ENCODE measurements at regions of chr14 and their contacts with region 1.

Region 1: DNA sequence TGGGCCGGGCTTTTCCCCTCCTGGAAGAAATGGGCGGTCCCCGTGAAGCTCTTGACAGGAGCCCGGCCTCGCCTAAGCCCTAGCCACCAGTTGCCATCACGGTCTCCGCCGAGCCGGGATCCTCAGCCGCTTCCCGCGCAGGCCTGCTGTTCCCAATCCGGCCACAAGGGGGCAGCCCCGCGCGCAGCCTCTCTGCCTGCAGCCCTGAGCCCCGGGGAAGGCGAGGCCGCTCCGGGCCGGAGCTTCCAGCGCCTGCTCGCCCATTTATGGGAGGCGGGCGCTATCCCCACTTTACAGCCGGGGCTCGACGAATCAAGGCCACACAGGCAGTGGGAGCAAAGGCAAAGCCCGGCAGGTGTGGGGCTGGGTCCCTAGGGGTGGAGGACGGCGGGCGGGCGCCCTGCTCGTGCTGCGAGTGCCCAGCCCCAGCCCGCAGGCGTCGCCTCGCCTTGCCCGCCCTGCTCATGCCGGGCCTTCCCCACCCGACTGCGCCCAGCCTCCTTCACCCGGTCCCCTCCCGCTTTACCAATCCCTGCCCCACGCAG is 61.5 kb downstream of the LGMN start:
- DNase-seq: peak; percentile 97
- H3K4me3 ChIP-seq: peak overlapping the region in 1 of 2 experiments; percentile 31; a peak in 2 of 4 replicates
- H3K27ac ChIP-seq: no peak overlapping the region
- H3K4me1 ChIP-seq: peaks cover 0 to 12% of the 10 kb centered on the region in 2 experiments; a peak in 1 of 4 replicates
- H3K27me3 ChIP-seq: no peaks in the 10 kb centered on the region
- CTCF ChIP-seq: peak; percentile 87
- EP300 ChIP-seq: no peak
- RAD21 ChIP-seq: peak; percentile 69

Region 2: GRCh38 chr14:92670160-92670559 is 16.8 kb before region 1 on chr14:
- CTCF ChIA-PET with region 1: interaction called, 30 read pairs
- POLR2A ChIA-PET with region 1: no interaction called
- DNase-seq: peak; percentile 52
- H3K4me3 ChIP-seq: no peak overlapping the region
- H3K27ac ChIP-seq: no peak overlapping the region
- H3K4me1 ChIP-seq: no peaks in the 10 kb centered on the region; a peak in 1 of 4 replicates
- H3K27me3 ChIP-seq: no peaks in the 10 kb centered on the region
- CTCF ChIP-seq: peak; percentile 16; the same call in 1 of the 2 replicates
- EP300 ChIP-seq: no peak; a peak in 1 of 4 replicates
- RAD21 ChIP-seq: peak; percentile 4; the same call in 1 of the 2 replicates

Region 3: DNA sequence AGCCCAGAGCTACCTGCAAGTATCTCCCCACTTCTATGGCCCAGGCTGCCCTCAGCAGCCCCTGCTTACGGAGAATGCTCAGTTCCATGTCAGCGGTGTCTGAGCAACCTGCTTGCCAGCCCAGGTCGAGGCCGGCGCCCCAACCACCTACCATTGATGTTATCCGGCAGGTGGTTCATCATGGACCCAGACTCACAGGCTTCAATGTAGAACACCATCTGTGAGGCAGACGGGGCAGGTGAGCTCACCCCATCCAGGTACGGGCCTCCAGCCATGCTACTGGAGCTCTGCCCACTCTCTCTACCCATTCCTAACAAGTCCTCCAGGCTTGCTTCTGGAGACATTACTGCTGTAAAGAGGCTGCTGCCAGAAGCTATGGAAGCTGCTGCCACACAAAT is 25.7 kb after region 1 on chr14:
- CTCF ChIA-PET with region 1: interaction called, 16 read pairs
- POLR2A ChIA-PET with region 1: no interaction called
- DNase-seq: no peak
- H3K4me3 ChIP-seq: no peak overlapping the region
- H3K27ac ChIP-seq: no peak overlapping the region
- H3K4me1 ChIP-seq: 0 out of 4 replicates have a peak, but pooled peaks cover 0 to 8% of the 10 kb centered on the region in 2 experiments
- H3K27me3 ChIP-seq: no peaks in the 10 kb centered on the region
- CTCF ChIP-seq: no peak
- EP300 ChIP-seq: no peak
- RAD21 ChIP-seq: no peak

Region 4: DNA sequence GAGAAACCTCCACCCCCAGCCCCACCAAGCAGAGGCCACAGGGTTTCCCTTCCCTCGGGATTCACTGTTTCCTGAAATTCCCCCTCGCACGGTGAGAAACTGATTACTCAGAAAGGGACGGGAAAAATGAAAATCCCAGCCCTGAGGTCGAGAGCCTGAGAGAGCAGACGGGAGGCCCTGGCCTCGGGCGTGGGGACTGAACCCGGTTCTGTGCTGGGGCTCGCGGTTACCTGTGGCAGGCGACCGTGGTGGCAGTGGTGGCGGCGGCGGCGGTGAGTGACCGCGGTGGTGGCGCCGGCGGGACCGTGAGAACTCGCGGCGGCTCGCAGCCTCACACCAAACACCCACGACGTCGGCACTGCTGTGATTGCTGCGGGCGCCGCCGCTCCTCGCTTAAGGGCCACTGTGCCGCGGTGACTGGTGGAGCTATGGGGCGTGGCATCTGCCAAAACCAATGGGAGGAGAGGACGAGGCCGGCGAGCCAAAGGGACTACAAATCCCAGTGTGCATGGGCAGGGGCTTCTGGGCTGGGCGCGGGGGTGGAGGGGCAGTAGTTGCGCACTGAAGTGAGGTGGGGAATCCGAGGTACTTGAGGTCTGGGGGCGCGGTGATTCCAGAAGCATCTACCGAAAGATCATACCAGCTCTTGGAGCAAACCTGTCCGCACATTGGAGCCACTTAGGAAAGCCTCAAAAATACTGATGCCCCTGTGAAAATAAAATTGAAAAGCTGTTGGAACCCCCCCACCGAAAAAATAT is 61.5 kb after region 1 on chr14 and contains the start of gene LGMN:
- CTCF ChIA-PET with region 1: interaction called, 16 read pairs
- POLR2A ChIA-PET with region 1: no interaction called
- DNase-seq: peak; percentile 95
- H3K4me3 ChIP-seq: peak within 1 kb of the TSS; percentile 76 to 93
- H3K27ac ChIP-seq: peak within 1 kb of the TSS; percentile 20 to 67; a peak in 3 of 4 replicates
- H3K4me1 ChIP-seq: peaks cover 0 to 6% of the 10 kb centered on the region in 2 experiments; a peak in 1 of 4 replicates
- H3K27me3 ChIP-seq: no peaks in the 10 kb centered on the region
- CTCF ChIP-seq: no peak
- EP300 ChIP-seq: no peak
- RAD21 ChIP-seq: no peak
- polyA plus RNA-seq, gene LGMN: 76.3 and 86.4 TPM in 2 replicates

Region 5: GRCh38 chr14:92783816-92784431 is 97.0 kb after region 1 on chr14:
- CTCF ChIA-PET with region 1: interaction called, 186 read pairs
- POLR2A ChIA-PET with region 1: no interaction called
- DNase-seq: peak; percentile 44
- H3K4me3 ChIP-seq: no peak overlapping the region
- H3K27ac ChIP-seq: no peak overlapping the region
- H3K4me1 ChIP-seq: no peaks in the 10 kb centered on the region
- H3K27me3 ChIP-seq: no peaks in the 10 kb centered on the region
- CTCF ChIP-seq: peak; percentile 75
- EP300 ChIP-seq: no peak
- RAD21 ChIP-seq: peak; percentile 87

Region 6: DNA sequence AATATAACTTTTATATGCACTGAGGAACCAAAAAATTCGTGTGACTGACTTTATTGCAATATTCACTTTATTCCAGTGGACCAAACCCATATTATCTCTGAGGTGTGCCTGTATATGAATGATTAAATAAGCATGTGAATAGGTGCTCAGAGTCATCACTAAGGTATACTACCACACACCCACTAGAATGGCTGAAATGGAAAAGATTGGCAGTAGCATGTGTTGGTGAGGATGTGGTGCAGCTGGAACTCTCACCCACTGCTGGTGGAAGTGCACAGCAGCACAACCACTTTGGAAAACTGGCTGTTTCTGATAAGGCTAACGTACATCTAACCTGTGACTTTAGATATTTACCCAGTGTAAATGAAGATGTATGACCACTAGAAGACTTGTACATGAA is 143.9 kb after region 1 on chr14:
- CTCF ChIA-PET with region 1: no interaction called
- POLR2A ChIA-PET with region 1: no interaction called
- DNase-seq: no peak
- H3K4me3 ChIP-seq: no peak overlapping the region
- H3K27ac ChIP-seq: no peak overlapping the region
- H3K4me1 ChIP-seq: no peaks in the 10 kb centered on the region
- H3K27me3 ChIP-seq: no peaks in the 10 kb centered on the region
- CTCF ChIP-seq: no peak
- EP300 ChIP-seq: no peak
- RAD21 ChIP-seq: no peak